Dendritic cell treated with granulocyte-macrophage colony-stimulating factor and Interleukin-4, amounts not matched to agents 40 ng/mL and 50 ng/mL, for 4 days (primary cell): ENCODE measurements at regions of chr10 and their contacts with region 1.

Region 1: DNA sequence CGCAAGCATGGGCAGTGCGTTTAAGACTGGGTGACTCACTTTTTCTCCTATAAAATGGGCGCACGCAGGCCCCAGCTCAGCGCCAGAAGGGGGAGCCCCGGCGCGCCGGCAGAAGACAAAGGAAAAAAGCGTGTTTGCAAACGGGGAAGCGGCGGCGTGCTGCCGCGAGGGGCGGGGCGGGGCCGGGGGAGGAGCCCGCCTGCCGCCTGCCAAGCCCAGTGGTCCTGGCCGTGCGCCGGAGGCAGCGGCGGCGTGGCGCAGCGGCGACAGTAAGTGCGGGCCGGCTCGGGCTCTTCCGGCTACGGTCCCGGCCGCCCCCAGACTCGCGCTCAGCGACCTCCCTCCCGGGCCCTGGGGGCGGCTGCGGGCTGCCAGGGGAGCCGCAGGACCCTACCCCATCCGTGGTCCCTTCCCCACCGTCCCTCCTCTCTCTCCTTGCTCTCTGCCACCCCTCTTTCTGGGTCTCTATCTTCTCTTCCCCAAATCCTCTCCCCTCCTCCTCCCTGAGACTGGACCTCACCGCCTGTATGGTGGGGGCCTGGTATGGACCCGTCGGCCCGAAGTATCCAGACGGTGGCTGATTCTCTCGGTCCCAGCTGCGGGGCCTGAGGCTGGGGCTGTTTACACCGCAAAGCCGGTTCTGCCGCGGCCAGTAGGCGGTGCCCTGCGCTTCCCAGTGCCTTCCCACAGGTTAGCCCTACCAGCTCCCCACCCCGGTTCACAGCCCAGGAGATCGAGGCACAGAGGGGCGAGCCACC is at the start of gene SLC29A3:
- H3K4me3 Mint-ChIP-seq: peak within 1 kb of the TSS; percentile 100
- H3K27ac Mint-ChIP-seq: peak within 1 kb of the TSS; percentile 90
- H3K4me1 Mint-ChIP-seq: peaks cover 77% of the 10 kb centered on the region
- H3K27me3 Mint-ChIP-seq: no peaks in the 10 kb centered on the region

Region 2: DNA sequence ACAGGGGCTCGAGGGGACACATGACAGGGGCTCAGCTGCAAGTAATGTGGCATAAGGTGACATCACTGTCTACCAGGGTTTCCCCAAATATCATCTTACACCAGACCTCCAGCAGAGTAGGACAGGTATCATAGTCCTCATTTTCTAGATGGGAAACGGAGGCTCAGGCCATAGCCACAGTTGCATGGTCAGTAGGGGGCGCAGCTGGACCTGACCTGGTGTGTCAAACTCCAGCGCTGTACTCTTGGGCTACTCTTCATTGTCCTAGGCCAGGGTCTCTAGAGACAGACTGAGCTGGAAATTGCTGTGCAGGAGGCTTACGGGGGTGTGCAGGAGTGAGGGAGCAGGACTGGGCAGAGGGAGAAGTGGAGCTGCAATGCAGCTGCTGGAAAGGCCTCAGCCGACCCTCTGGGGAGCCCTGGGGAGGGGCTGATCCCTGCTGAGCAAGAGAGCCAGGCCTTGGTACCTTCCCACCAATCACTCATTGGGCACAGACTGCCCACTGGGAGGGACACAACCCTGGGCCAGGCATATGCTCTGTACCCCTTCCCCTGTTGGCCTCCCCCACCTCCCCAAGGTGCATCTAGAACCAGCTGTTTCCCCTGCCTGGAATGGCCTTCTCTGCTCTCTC is 167.4 kb after region 1 on chr10:
- intact Hi-C with region 1: loop called (anchors 10 kb)
- H3K4me3 Mint-ChIP-seq: no peak overlapping the region
- H3K27ac Mint-ChIP-seq: no peak overlapping the region
- H3K4me1 Mint-ChIP-seq: peaks cover 8% of the 10 kb centered on the region
- H3K27me3 Mint-ChIP-seq: peaks cover 5% of the 10 kb centered on the region

Region 3: DNA sequence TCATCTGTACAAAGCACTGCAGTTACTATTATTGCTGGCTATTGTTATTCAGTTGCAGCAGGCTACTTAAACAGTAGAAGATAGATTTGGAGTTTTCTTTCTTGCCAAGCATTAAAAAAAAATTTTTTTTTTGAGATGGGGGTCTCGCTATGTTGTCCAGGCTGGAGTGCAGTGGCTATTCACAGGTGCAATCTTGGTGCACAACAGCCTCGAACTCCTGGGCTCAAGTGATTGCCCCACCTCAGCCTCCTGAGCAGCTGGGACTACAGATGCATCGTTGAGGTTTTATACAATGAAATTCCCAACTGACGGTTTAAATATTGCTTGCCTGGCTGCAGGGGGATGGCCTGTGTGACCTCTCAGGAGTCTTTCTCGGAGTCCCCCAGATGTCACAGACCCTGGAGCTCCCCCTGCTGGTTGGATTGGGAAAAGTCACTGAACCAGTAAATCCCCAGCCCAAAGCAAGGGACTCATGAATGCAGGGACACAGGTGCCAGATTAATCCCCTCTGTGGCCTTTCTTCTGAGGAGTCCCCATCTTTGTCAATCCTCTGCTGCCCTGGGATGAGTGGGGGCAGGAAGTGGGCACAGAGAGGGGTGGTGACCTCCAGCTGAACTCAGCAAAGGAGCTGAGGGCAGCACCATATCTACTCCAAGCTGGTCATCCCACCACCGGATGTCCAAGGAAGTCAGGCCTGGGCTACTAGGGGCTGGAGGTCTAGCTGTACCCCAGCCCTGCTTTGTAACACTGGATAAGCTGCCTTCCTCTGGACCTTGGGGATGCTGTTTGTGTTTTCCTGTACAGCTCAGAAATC is 250.8 kb after region 1 on chr10:
- intact Hi-C with region 1: loop called (anchors 1 kb)
- H3K4me3 Mint-ChIP-seq: no peak overlapping the region
- H3K27ac Mint-ChIP-seq: no peak overlapping the region
- H3K4me1 Mint-ChIP-seq: peaks cover 9% of the 10 kb centered on the region
- H3K27me3 Mint-ChIP-seq: peaks cover 2% of the 10 kb centered on the region

Region 4: GRCh38 chr10:71812016-71812912 is 493.0 kb after region 1 on chr10:
- intact Hi-C with region 1: loop called (anchors 10 kb)
- H3K4me3 Mint-ChIP-seq: no peak overlapping the region
- H3K27ac Mint-ChIP-seq: no peak overlapping the region
- H3K4me1 Mint-ChIP-seq: peaks cover 47% of the 10 kb centered on the region
- H3K27me3 Mint-ChIP-seq: no peaks in the 10 kb centered on the region

Region 5: GRCh38 chr10:72048450-72049124 is 729.4 kb after region 1 on chr10:
- intact Hi-C with region 1: loop called (anchors 10 kb)
- H3K4me3 Mint-ChIP-seq: no peak overlapping the region
- H3K27ac Mint-ChIP-seq: no peak overlapping the region
- H3K4me1 Mint-ChIP-seq: no peaks in the 10 kb centered on the region
- H3K27me3 Mint-ChIP-seq: peaks cover 1% of the 10 kb centered on the region